Body of pancreas (tissue), 4 donors: ENCODE measurements at regions of chr7 and their contacts with region 1.

Region 1: GRCh38 chr7:100852048-100852872 is at the start of gene SLC12A9:
- DNase-seq: peak; percentile 86 to 91 (median 90)
- ATAC-seq: peak; percentile 98
- H3K4me3 ChIP-seq: peak within 1 kb of the TSS; percentile 59 to 62
- H3K27ac ChIP-seq: peak within 1 kb of the TSS; percentile 14 to 69 (median 28)
- H3K4me1 ChIP-seq: peaks cover 19% of the 10 kb centered on the region
- H3K27me3 ChIP-seq: no peaks in the 10 kb centered on the region
- CTCF ChIP-seq: peak; percentile 84 to 97 (median 94)
- POLR2A ChIP-seq: peak in 2 of 3 donors; percentile 50 to 54
- total RNA-seq, gene SLC12A9: 12.7 to 38.9 TPM

Region 2: GRCh38 chr7:100705753-100706671 is 146.2 kb before region 1 on chr7 and contains the start of gene POP7:
- intact Hi-C with region 1: loop called (anchors 5 kb)
- DNase-seq: peak; percentile 99 to 100 (median 100)
- ATAC-seq: peak; percentile 97
- H3K4me3 ChIP-seq: peak within 1 kb of the TSS; percentile 72 to 96
- H3K27ac ChIP-seq: peak within 1 kb of the TSS; percentile 81 to 91 (median 86)
- H3K4me1 ChIP-seq: peaks cover 23% of the 10 kb centered on the region
- H3K27me3 ChIP-seq: no peaks in the 10 kb centered on the region
- CTCF ChIP-seq: peak in 1 of 7 experiments; percentile 15
- POLR2A ChIP-seq: peak; percentile 40 to 72 (median 66)
- total RNA-seq, gene POP7: 17.1 to 20.8 TPM

Region 3: GRCh38 chr7:100799014-100799896 is 53.0 kb before region 1 on chr7:
- intact Hi-C with region 1: loop called (anchors 5 kb)
- DNase-seq: peak; percentile 77 to 83 (median 79)
- ATAC-seq: peak; percentile 65
- H3K4me3 ChIP-seq: no peak overlapping the region
- H3K27ac ChIP-seq: no peak overlapping the region
- H3K4me1 ChIP-seq: peaks cover 49% of the 10 kb centered on the region
- H3K27me3 ChIP-seq: no peaks in the 10 kb centered on the region
- CTCF ChIP-seq: peak; percentile 66 to 90 (median 83)
- POLR2A ChIP-seq: no peak

Region 4: DNA sequence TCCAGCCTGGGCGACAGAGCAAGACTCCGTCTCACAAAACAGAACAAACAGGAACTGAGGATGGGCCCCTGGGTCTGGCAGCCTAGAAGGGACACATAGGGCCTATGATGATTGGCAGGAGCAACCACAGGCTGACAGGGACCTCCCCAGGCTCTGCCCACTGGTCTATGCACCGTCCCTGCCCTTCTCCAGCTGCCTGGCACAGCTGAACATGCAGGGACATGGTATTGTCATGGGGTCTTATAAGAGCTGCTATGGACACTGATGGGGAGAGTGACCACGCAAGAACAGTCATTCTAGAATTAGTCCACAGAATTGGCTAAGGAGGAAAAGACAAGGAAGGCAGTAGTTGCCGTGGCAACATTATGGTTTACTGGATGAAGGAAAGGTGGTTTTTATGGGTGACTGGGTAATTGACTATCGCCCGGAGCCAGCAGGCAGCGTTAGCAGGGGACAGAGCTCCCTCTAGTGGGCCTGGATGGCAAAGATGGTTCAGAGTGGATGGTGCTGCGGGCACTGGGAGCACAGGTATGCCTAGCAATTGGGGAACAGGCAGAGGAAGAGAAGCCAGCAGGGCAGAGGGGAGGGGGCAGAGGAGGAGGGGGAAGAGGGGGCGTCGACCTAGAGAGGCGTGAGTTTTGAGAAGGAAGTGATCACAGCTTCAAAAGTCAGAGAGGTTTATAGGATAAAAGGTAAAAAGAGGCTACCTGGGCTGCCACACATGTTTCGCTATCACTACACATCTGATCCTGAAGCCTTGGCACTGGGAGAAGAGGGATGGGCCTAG is 225.2 kb after region 1 on chr7:
- intact Hi-C with region 1: no loop called
- DNase-seq: peak; percentile 85 to 90 (median 86)
- ATAC-seq: peak; percentile 97
- H3K4me3 ChIP-seq: no peak overlapping the region
- H3K27ac ChIP-seq: no peak overlapping the region
- H3K4me1 ChIP-seq: no peaks in the 10 kb centered on the region
- H3K27me3 ChIP-seq: no peaks in the 10 kb centered on the region
- CTCF ChIP-seq: peak; percentile 62 to 87 (median 82)
- POLR2A ChIP-seq: no peak

Region 5: DNA sequence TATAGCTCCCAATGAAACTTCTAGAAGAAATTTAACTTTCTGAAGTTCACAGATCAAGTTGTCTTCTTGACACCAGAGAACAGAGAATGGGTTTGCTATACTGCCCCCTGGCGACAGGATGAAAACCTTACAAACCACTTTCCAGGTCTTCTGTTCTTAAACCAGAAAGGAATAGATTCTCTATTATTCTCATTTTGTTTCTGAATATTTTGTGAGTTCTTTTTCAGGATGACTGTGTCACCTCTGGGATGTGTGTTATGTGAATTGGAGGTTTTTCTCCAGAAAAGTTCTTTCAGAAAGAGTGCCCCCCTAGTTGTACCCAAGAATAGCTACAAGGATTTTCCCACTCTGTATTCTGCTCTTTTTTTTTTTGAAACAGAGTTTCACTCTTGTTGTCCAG is 463.1 kb after region 1 on chr7:
- intact Hi-C with region 1: no loop called
- DNase-seq: peak; percentile 37 to 54 (median 50)
- ATAC-seq: no peak
- H3K4me3 ChIP-seq: no peak overlapping the region
- H3K27ac ChIP-seq: no peak overlapping the region
- H3K4me1 ChIP-seq: no peaks in the 10 kb centered on the region
- H3K27me3 ChIP-seq: no peaks in the 10 kb centered on the region
- CTCF ChIP-seq: peak; percentile 40 to 59 (median 49)
- POLR2A ChIP-seq: no peak